Panc1 (cell line): ENCODE measurements at regions of chr3 and their contacts with region 1.

Region 1: GRCh38 chr3:138417559-138417982 is 16.8 kb upstream of the ESYT3 start:
- DNase-seq: peak; percentile 67
- ATAC-seq: peak; percentile 98
- H3K4me3 ChIP-seq: no peak overlapping the region
- H3K27ac ChIP-seq: no peak overlapping the region
- H3K4me1 ChIP-seq: no peaks in the 10 kb centered on the region
- H3K27me3 ChIP-seq: peaks cover 5% of the 10 kb centered on the region; the same call in 1 of the 2 replicates
- CTCF ChIP-seq: peak; percentile 97

Region 2: DNA sequence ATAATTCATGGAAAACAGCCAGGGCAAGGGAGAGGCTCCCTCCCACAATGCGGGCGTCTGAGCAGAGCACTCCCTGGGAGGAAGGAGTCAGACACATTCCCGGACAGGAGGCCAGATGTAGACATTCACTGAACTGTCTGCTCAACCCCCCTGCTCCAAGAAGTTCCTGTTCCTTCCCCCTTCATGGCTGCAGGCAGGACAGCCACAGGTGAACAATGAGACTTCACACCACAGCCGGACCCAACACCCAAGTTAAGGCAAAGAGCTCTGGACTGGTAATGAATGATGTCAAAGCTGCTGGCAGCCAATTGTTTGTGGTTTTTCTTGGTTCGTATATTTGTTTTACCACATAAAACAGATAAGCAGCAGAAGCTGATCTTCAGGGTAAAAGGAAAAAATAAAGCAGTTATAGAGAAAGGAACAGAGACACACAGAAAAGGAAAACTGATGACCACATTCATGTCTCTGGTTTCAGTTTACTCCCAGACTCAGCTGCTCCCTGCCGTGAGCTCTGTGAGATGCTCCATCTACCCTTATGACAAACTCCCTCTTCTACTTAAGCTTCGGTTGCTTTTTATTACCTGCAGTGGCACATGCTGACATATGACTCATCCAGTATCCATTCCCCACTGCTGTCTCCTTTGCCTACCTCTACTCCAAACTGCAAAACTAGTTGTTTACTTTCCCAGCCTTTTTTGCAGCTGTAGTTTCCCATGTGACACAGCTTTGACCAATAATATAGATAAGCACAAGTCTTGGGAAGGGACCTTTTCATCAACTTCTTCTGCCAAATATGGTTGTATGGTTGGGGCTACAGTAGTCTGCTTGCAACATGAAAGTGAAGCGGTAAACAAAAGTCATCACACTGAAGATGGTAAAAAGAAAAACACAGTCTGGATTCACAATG is 335.2 kb before region 1 on chr3:
- CTCF ChIA-PET with region 1: no interaction called
- POLR2A ChIA-PET with region 1: no interaction called
- in situ Hi-C with region 1: no loop called
- intact Hi-C with region 1: no loop called
- DNase-seq: no peak
- ATAC-seq: peak; percentile 81
- H3K4me3 ChIP-seq: no peak overlapping the region
- H3K27ac ChIP-seq: peak overlapping the region; percentile 29; the same call in 1 of the 2 replicates
- H3K4me1 ChIP-seq: peaks cover 12% of the 10 kb centered on the region
- H3K27me3 ChIP-seq: no peaks in the 10 kb centered on the region
- CTCF ChIP-seq: no peak

Region 3: DNA sequence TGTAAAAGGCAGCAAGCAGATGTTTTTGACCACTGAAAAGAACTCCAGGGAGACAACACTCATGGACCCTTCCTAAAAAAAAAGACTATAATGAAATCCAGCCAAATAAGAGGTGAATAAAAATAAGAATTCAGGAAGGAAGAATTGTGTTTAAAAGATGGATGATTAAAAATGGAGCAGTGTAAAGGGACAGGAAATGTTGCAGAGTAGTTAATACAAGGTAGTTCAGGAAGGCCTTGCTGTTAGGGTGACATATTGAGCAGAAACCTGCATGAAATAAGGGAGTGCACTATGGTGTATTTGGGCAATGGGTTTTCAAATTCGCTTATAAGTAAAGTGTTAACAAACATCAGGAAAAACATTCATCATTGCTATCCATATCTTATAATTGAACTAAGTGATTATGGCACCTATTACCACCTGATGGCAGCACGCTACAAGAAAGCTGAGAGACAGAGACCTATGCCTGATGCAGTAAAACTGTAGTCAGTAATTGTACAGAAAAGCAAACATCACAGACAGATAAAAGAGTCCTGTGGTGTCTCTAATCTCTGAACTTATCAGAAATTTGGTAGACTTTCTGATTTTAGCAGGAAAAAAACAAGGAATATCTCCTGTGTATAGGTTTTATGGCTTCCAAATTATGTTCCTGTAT is 237.1 kb before region 1 on chr3:
- CTCF ChIA-PET with region 1: interaction called, 8 read pairs
- POLR2A ChIA-PET with region 1: no interaction called
- in situ Hi-C with region 1: no loop called
- intact Hi-C with region 1: loop called (anchors 5 kb)
- DNase-seq: no peak
- ATAC-seq: peak; percentile 96
- H3K4me3 ChIP-seq: no peak overlapping the region
- H3K27ac ChIP-seq: no peak overlapping the region
- H3K4me1 ChIP-seq: no peaks in the 10 kb centered on the region
- H3K27me3 ChIP-seq: no peaks in the 10 kb centered on the region; the same call in 1 of the 2 replicates
- CTCF ChIP-seq: peak; percentile 76; the same call in 1 of the 2 replicates